Calu3 (cell line): ENCODE measurements at regions of chr14 and their contacts with region 1.

Region 1: GRCh38 chr14:69260861-69261564 is 1.1 kb downstream of the GALNT16 start:
- DNase-seq: peak; percentile 78
- H3K4me3 Mint-ChIP-seq: peak overlapping the region; percentile 77
- H3K27ac Mint-ChIP-seq: no peak overlapping the region
- H3K4me1 Mint-ChIP-seq: no peaks in the 10 kb centered on the region
- H3K27me3 Mint-ChIP-seq: peaks cover 75% of the 10 kb centered on the region
- CTCF ChIP-seq: peak; percentile 81

Region 2: DNA sequence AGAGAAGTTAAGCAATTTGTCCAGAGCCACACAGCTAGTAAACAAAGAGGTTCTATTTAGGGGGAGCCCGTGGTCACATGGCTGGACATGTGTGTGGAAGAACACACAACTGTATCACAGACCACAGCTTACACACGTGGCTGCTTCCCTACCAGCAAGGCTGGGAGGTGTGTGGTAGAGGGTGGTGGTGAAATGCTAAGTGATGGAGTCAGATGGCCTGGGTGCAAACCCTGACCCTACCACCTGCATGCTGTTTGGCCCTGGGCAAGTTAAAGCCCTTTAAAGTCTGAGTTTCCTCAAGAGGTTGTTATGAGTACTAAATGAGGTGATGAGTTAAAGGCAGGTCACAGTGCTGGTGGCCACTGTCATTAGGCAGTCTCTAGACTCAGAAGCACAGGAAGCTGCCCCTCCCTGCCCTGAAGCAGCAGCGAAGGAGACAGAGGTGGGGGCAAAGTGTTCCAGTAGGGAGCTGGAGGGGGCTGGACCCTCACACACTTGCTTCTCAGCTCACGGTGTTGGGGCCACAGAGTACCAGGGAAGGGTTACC is 72.9 kb after region 1 on chr14:
- CTCF ChIA-PET with region 1: no interaction called
- intact Hi-C with region 1: loop called (anchors 5 kb)
- DNase-seq: no peak
- H3K4me3 Mint-ChIP-seq: no peak overlapping the region
- H3K27ac Mint-ChIP-seq: no peak overlapping the region
- H3K4me1 Mint-ChIP-seq: no peaks in the 10 kb centered on the region
- H3K27me3 Mint-ChIP-seq: peaks cover 14% of the 10 kb centered on the region
- CTCF ChIP-seq: no peak

Region 3: GRCh38 chr14:69818757-69819191 is 557.8 kb after region 1 on chr14:
- CTCF ChIA-PET with region 1: no interaction called
- intact Hi-C with region 1: no loop called
- DNase-seq: peak; percentile 78
- H3K4me3 Mint-ChIP-seq: no peak overlapping the region
- H3K27ac Mint-ChIP-seq: no peak overlapping the region
- H3K4me1 Mint-ChIP-seq: peaks cover 10% of the 10 kb centered on the region
- H3K27me3 Mint-ChIP-seq: no peaks in the 10 kb centered on the region
- CTCF ChIP-seq: peak; percentile 80